HCT116 (cell line): ENCODE measurements at regions of chr10 and their contacts with region 1.

Region 1: DNA sequence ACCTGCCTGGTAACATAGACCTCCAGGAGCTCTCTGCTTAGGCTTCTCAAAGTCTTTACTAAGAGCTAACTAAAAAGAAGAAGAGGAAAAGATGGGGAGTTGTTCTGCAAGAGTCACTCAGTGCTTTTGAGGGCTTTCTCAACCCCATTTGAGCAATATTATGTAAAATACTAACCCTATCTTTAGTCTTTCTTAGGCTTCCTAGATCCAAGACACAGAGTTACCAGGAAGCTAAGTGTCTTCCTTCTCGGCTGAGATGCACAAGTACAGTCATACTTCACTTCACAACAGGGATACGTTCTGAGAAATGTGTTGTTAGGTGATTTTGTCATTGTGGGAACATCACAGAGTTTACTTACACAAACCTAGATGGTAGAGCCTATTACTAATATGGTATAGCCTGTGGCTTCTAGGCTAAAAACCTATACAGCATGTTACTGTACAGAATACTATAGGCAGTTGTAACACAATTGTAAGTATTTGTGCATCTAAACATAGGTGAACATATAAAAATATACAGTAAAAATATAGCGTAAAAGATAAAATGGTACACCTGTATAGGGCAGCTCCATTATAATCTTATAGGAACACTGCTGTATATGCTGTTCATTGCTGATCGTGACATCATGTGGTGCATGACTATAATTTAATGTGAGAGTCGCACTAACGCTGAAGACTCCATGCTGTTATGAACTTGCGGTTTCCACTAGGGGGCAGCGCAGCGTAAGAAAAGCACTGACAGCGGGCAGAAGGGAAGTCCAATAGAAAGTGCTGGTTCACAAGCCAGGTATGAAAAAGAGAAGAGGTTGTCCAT is 16.3 kb downstream of the ANKRD22 start:
- DNase-seq: peak; percentile 83
- ATAC-seq: peak; percentile 97
- H3K4me3 ChIP-seq: no peak overlapping the region
- H3K27ac ChIP-seq: no peak overlapping the region
- H3K4me1 ChIP-seq: peaks cover 0 to 8% of the 10 kb centered on the region in 2 experiments; a peak in 1 of 4 replicates
- H3K27me3 ChIP-seq: no peaks in the 10 kb centered on the region
- CTCF ChIP-seq: peak; percentile 82 to 97 (median 93)
- POLR2A ChIP-seq: no peak
- RAD21 ChIP-seq: peak; percentile 99

Region 2: GRCh38 chr10:88032566-88032965 is 802.7 kb before region 1 on chr10:
- CTCF ChIA-PET with region 1: no interaction called
- POLR2A ChIA-PET with region 1: no interaction called
- RAD21 ChIA-PET with region 1: no interaction called
- intact Hi-C with region 1: no loop called
- DNase-seq: no peak
- ATAC-seq: no peak
- H3K4me3 ChIP-seq: no peak overlapping the region
- H3K27ac ChIP-seq: no peak overlapping the region
- H3K4me1 ChIP-seq: peaks cover 4 to 8% of the 10 kb centered on the region in 2 experiments; a peak in 3 of 4 replicates
- H3K27me3 ChIP-seq: no peaks in the 10 kb centered on the region
- CTCF ChIP-seq: no peak
- POLR2A ChIP-seq: no peak
- RAD21 ChIP-seq: no peak

Region 3: DNA sequence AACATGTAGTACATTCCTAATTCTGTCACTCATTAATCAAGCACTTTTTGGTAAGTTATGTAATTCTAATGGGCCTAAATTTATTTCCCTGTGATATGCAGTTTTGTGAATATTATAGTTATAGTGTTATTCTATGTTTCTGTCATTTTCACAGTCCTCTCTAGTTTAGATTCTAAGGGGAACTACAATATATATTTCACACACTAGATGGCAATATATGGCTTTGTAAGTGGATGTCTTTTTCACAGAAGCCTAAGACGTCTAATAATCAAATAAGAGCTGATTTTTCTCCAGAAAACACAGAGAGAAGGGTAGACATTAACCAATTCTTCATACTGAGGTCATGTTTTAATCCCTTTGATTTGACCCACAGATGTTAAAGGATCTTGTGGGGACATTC is 270.2 kb before region 1 on chr10:
- CTCF ChIA-PET with region 1: interaction called, 26 read pairs
- POLR2A ChIA-PET with region 1: no interaction called
- RAD21 ChIA-PET with region 1: interaction called, 3 to 11 read pairs
- intact Hi-C with region 1: no loop called
- DNase-seq: peak; percentile 12
- ATAC-seq: peak; percentile 80
- H3K4me3 ChIP-seq: no peak overlapping the region
- H3K27ac ChIP-seq: no peak overlapping the region
- H3K4me1 ChIP-seq: no peaks in the 10 kb centered on the region
- H3K27me3 ChIP-seq: no peaks in the 10 kb centered on the region
- CTCF ChIP-seq: peak; percentile 29 to 67 (median 64)
- POLR2A ChIP-seq: no peak
- RAD21 ChIP-seq: peak; percentile 82

Region 4: DNA sequence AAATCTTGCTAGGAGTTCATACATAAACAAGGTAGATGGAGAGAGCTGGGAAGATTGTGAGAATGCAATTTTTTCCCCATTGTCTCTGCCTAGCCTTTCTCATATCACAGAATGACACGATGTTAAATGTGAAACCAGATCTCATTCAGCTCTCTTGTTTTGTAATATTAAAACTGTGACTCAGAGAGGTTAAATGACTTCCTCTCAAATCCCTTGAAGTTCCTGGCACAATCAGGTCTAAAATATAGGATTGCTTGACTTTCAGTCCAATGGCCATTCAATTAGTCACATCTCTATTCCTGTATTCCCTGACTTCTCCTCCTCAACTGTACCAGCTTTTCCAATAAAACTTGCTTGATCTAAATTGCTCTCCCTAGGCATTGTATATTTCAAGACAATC is 13.2 kb after region 1 on chr10:
- CTCF ChIA-PET with region 1: interaction called, 15 read pairs
- POLR2A ChIA-PET with region 1: interaction called, 3 read pairs
- RAD21 ChIA-PET with region 1: no interaction called
- intact Hi-C with region 1: no loop called
- DNase-seq: peak; percentile 18
- ATAC-seq: no peak
- H3K4me3 ChIP-seq: peak overlapping the region in 1 of 2 experiments; percentile 41; a peak in 2 of 4 replicates
- H3K27ac ChIP-seq: peak overlapping the region; percentile 1; the same call in 1 of the 2 replicates
- H3K4me1 ChIP-seq: peaks cover 19 to 45% of the 10 kb centered on the region in 2 experiments
- H3K27me3 ChIP-seq: no peaks in the 10 kb centered on the region
- CTCF ChIP-seq: no peak
- POLR2A ChIP-seq: no peak
- RAD21 ChIP-seq: no peak

Region 5: GRCh38 chr10:88865281-88865876 is 30.1 kb after region 1 on chr10:
- CTCF ChIA-PET with region 1: interaction called, 7 read pairs
- POLR2A ChIA-PET with region 1: no interaction called
- RAD21 ChIA-PET with region 1: interaction called, 3 read pairs
- intact Hi-C with region 1: loop called (anchors 1 kb)
- DNase-seq: no peak
- ATAC-seq: peak; percentile 67
- H3K4me3 ChIP-seq: no peak overlapping the region
- H3K27ac ChIP-seq: no peak overlapping the region
- H3K4me1 ChIP-seq: no peaks in the 10 kb centered on the region
- H3K27me3 ChIP-seq: no peaks in the 10 kb centered on the region
- CTCF ChIP-seq: peak; percentile 26 to 73 (median 33); a peak in 4 of 6 replicates
- POLR2A ChIP-seq: no peak
- RAD21 ChIP-seq: peak; percentile 75

Region 6: DNA sequence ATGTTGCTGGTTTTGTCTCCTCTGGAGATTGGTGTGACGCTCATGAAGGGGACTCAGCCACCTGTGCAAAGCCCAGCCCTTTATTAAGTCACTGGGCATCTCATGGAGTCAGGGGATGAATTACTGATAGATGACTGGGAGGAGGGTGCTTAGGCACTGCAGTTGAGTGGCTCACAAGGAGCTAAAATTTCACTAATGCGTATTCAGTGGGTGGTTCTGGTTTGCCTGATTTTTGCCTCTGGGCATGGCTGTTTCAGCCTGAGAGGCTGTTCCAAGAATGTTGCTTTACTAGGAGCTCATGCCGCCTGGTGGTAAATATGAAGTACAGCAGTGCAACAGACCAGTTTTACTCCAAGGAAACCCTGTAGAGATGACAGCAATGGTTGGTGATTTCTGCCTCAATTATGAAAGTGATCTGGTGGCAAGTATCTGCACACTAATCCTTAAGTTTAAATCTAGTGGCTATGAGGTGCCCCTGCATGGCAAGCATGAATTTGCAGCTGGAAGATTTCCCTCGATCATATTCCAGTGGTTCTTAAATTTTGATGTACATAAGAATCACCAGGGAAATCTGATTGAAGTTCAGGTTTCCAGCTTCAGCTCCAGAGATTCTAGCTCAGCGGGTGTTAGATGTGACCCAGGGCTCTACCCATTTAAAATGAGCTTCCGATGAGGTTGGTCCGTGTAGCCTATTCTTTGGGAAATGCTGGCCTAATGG is 97.4 kb after region 1 on chr10:
- CTCF ChIA-PET with region 1: interaction called, 148 read pairs
- POLR2A ChIA-PET with region 1: interaction called, 4 read pairs
- RAD21 ChIA-PET with region 1: interaction called, 7 to 10 read pairs
- intact Hi-C with region 1: loop called (anchors 1 kb)
- DNase-seq: peak; percentile 46
- ATAC-seq: peak; percentile 85
- H3K4me3 ChIP-seq: no peak overlapping the region
- H3K27ac ChIP-seq: no peak overlapping the region
- H3K4me1 ChIP-seq: peaks cover 7 to 16% of the 10 kb centered on the region in 2 experiments; a peak in 3 of 4 replicates
- H3K27me3 ChIP-seq: no peaks in the 10 kb centered on the region
- CTCF ChIP-seq: peak; percentile 78 to 94 (median 93)
- POLR2A ChIP-seq: no peak
- RAD21 ChIP-seq: peak; percentile 96

Region 7: GRCh38 chr10:88990384-88991160 is 155.3 kb after region 1 on chr10 and contains the start of gene FAS:
- CTCF ChIA-PET with region 1: interaction called, 7 read pairs
- POLR2A ChIA-PET with region 1: interaction called, 4 read pairs
- RAD21 ChIA-PET with region 1: no interaction called
- intact Hi-C with region 1: loop called (anchors 2 kb)
- DNase-seq: peak; percentile 56
- ATAC-seq: peak; percentile 87
- H3K4me3 ChIP-seq: peak within 1 kb of the TSS; percentile 73 to 89
- H3K27ac ChIP-seq: peak within 1 kb of the TSS; percentile 83
- H3K4me1 ChIP-seq: peaks cover 0 to 28% of the 10 kb centered on the region in 2 experiments; a peak in 3 of 4 replicates
- H3K27me3 ChIP-seq: no peaks in the 10 kb centered on the region
- CTCF ChIP-seq: no peak
- POLR2A ChIP-seq: no peak
- RAD21 ChIP-seq: no peak
- total RNA-seq, gene FAS: 9.3 TPM